ENCODE measurements at regions of chr13 and their contacts with region 1.

Region 1: GRCh38 chr13:114314074-114314912 is at the start of gene CHAMP1:
- DNase-seq: peak; percentile 98
- H3K4me3 ChIP-seq: peak within 1 kb of the TSS; percentile 72 to 89 (median 82)
- H3K27ac ChIP-seq: peak within 1 kb of the TSS; percentile 94 to 97 (median 96)
- H3K4me1 ChIP-seq: peaks cover 0 to 68% (median 54%) of the 10 kb centered on the region in 4 donors
- H3K27me3 ChIP-seq: no peaks in the 10 kb centered on the region
- CTCF ChIP-seq: no peak
- EP300 ChIP-seq: no peak
- POLR2A ChIP-seq: peak in 1 of 2 donors; percentile 26
- total RNA-seq, gene CHAMP1: 9.4 to 15.9 (median 13.1) TPM

Region 2: GRCh38 chr13:114281351-114282040 is 32.8 kb before region 1 on chr13 and contains the start of gene UPF3A:
- intact Hi-C with region 1: loop called (anchors 2 kb)
- DNase-seq: peak; percentile 96
- H3K4me3 ChIP-seq: peak within 1 kb of the TSS; percentile 73 to 86 (median 86)
- H3K27ac ChIP-seq: peak within 1 kb of the TSS; percentile 98 to 99 (median 98)
- H3K4me1 ChIP-seq: peaks cover 0 to 35% (median 20%) of the 10 kb centered on the region in 4 donors
- H3K27me3 ChIP-seq: no peaks in the 10 kb centered on the region
- CTCF ChIP-seq: no peak
- EP300 ChIP-seq: no peak
- POLR2A ChIP-seq: peak; percentile 61 to 66
- total RNA-seq, gene UPF3A: 32.4 to 65.9 (median 43.2) TPM